ENCODE measurements at regions of chr6 and their contacts with region 1.

Region 1: GRCh38 chr6:123316733-123317323 is 319.9 kb downstream of the TRDN start:
- DNase-seq: no peak
- ATAC-seq: no peak

Region 2: GRCh38 chr6:122869437-122870024 is 447.3 kb before region 1 on chr6:
- intact Hi-C with region 1: loop called (anchors 5 kb)
- DNase-seq: no peak
- ATAC-seq: peak; percentile 82

Region 3: DNA sequence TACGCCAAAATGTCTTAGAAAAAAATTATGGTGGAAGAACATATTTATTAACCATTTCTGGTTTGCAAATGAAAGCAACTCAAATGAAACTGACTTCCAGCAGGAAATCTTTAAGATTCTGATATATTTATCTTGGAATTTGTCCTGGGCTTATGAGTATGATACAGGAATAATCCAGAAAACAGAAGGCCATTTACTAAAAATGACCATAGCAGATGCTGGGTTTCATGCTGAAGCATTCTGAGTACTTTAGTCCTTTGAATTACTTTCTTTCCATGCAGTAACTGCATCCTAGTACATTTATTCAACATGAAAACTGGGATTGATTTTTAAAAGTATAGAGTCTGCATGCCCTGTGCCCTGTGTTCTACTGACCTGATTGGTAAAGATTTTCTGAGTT is 148.4 kb before region 1 on chr6:
- intact Hi-C with region 1: no loop called
- DNase-seq: no peak
- ATAC-seq: no peak

Region 4: DNA sequence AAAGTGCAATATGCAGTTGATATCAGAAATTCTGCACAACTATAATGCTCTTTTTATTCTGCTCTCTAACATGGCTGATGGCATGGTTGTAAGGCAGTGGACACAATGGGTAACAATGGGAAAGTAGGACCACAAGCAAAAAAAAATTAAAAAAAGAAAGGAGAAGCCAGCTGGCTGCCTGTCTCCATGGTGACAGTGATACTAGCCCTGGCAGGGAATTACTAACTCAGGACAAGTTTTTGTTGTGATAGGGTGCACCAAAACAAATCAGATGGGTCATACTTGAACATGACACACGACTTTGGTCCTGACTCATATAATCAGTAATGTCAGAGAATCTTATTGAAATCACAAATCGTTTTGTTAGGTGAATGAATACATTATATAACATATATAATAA is 150.6 kb after region 1 on chr6:
- intact Hi-C with region 1: no loop called
- DNase-seq: no peak
- ATAC-seq: peak; percentile 32

Region 5: DNA sequence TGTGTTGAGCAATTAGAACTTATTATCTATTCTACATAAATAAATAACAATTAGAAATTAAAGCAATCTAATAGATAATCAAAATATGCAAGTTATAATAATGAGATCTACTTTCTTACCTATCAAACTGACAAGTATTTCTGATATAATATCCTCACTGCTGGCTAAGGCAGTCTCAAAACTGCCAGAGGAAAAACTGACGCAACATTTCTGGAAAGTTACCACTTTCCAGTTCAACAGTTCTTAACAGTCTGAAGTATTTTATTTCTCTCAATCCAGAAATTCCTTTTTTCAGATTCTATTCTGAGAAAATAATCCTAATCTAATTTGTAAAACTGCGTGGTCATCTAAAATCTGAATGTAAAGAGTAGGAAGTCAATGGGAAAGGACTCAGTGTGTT is 198.9 kb after region 1 on chr6:
- intact Hi-C with region 1: no loop called
- DNase-seq: no peak
- ATAC-seq: no peak

Region 6: DNA sequence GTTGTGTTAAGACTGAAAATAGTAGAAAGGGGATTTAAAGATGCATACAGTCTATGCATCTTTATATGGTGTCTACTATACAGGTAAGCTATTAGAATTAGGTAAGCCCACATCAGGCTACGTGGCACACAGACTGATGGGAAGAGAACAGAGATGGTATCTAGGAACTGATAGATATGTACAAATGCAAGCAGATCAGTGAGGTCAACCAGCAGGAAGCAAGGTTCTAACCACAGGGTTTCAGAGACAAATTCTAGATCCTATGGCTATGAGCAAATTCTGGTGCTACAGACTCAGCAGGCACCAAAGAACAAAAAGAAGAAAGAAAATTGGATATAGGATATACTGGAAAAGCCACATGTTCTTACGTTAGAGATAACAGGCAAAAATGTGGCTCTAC is 209.3 kb after region 1 on chr6:
- intact Hi-C with region 1: no loop called
- DNase-seq: no peak
- ATAC-seq: no peak

Measured in Right ventricle myocardium superior (tissue), 1 donor.